ENCODE measurements at regions of chr20 and their contacts with region 1.

Region 1: DNA sequence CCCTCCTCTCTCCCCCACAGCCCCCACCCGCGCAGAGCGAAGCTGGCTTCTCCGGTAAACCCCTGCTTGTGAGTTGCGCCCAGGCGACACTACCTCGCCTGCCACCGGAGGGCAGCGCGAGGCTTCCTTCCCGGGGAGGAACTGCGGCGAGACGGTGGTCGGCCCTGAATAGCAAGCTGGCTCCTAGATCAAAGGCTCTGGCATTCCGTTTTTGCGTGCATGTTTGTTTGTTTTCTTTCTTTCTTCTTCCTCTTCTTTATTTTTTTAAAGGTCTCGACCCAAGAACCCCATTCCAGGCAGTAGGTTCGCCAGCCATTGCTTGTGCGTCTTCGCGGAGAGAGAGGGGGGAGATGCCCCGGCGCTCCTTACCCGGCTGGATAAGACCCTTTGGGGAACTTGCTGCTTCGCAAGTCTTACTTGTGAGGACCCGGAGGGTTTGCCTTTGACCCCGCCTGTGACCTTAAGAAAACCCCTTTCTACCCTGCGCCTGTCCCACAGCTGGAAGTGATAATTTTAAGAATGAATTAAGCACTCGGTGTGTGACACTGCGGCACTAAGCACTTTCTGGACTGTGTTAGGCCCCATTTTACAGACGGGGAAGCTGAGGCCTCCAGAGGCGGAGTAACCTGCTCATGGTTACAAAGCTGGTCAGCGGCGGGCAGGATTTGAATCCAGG is 92.7 kb upstream of the SIRPA start:
- DNase-seq: peak; percentile 70 to 78
- ATAC-seq: peak; percentile 84 to 87
- H3K4me3 ChIP-seq: peak overlapping the region; percentile 28
- H3K27ac ChIP-seq: peak overlapping the region; percentile 47 to 62; a peak in 5 of 6 replicates
- H3K4me1 ChIP-seq: peaks cover 11% of the 10 kb centered on the region
- CTCF ChIP-seq: peak; percentile 81
- EP300 ChIP-seq: no peak
- POLR2A ChIP-seq: no peak
- RAD21 ChIP-seq: peak; percentile 84 to 95

Region 2: DNA sequence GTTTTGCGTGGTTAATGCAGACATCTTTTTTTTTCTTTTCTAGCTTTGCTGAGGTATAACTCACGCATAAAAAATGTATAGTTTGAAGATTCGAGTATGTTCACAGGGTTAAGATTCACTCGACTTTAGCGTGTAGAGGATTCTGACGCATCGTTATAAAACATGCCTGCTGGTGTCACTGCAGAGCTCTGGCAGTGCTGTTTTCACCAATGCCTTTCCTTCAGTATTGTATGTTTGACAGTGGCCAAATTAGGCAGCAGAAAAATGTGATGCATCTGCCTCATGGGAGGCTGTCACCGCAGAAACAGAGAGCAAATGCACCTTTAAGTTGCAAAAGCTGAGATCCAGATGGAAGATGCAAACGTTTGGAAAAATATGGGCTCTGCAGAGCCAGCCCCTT is 293.3 kb before region 1 on chr20:
- CTCF ChIA-PET with region 1: interaction called, 13 read pairs
- POLR2A ChIA-PET with region 1: no interaction called
- DNase-seq: peak; percentile 26 to 39
- ATAC-seq: peak; percentile 89 to 92
- H3K4me3 ChIP-seq: no peak overlapping the region
- H3K27ac ChIP-seq: no peak overlapping the region
- H3K4me1 ChIP-seq: peaks cover 9% of the 10 kb centered on the region; the same call in 1 of the 3 replicates
- CTCF ChIP-seq: peak; percentile 56
- EP300 ChIP-seq: no peak
- POLR2A ChIP-seq: no peak
- RAD21 ChIP-seq: peak; percentile 56 to 65

Region 3: GRCh38 chr20:1784586-1784985 is 17.9 kb before region 1 on chr20:
- CTCF ChIA-PET with region 1: interaction called, 119 read pairs
- POLR2A ChIA-PET with region 1: no interaction called
- DNase-seq: no peak
- ATAC-seq: no peak
- H3K4me3 ChIP-seq: no peak overlapping the region
- H3K27ac ChIP-seq: no peak overlapping the region
- H3K4me1 ChIP-seq: no peaks in the 10 kb centered on the region
- CTCF ChIP-seq: no peak
- EP300 ChIP-seq: no peak
- POLR2A ChIP-seq: no peak
- RAD21 ChIP-seq: no peak

Region 4: GRCh38 chr20:1830240-1830639 is 27.7 kb after region 1 on chr20:
- CTCF ChIA-PET with region 1: interaction called, 17 read pairs
- POLR2A ChIA-PET with region 1: no interaction called
- DNase-seq: peak; percentile 79 to 91
- ATAC-seq: peak; percentile 77 to 87
- H3K4me3 ChIP-seq: no peak overlapping the region
- H3K27ac ChIP-seq: peak overlapping the region; percentile 32 to 69; a peak in 4 of 6 replicates
- H3K4me1 ChIP-seq: peaks cover 36% of the 10 kb centered on the region
- CTCF ChIP-seq: no peak
- EP300 ChIP-seq: peak in 1 of 2 experiments; percentile 57; a peak in 1 of 5 replicates
- POLR2A ChIP-seq: no peak
- RAD21 ChIP-seq: peak in 1 of 2 experiments; percentile 7; a peak in 1 of 5 replicates

Region 5: GRCh38 chr20:1870792-1871550 is 68.4 kb after region 1 on chr20:
- CTCF ChIA-PET with region 1: interaction called, 30 read pairs
- POLR2A ChIA-PET with region 1: no interaction called
- DNase-seq: no peak
- ATAC-seq: no peak
- H3K4me3 ChIP-seq: no peak overlapping the region
- H3K27ac ChIP-seq: no peak overlapping the region
- H3K4me1 ChIP-seq: peaks cover 25% of the 10 kb centered on the region
- CTCF ChIP-seq: no peak
- EP300 ChIP-seq: no peak
- POLR2A ChIP-seq: no peak
- RAD21 ChIP-seq: no peak

Region 6: GRCh38 chr20:1900321-1900801 is 97.8 kb after region 1 on chr20:
- CTCF ChIA-PET with region 1: interaction called, 12 read pairs
- POLR2A ChIA-PET with region 1: interaction called, 3 read pairs
- DNase-seq: peak; percentile 89 to 98
- ATAC-seq: peak; percentile 95 to 99
- H3K4me3 ChIP-seq: no peak overlapping the region
- H3K27ac ChIP-seq: peak overlapping the region in 1 of 2 experiments; percentile 56; a peak in 2 of 6 replicates
- H3K4me1 ChIP-seq: peaks cover 37% of the 10 kb centered on the region
- CTCF ChIP-seq: peak; percentile 80
- EP300 ChIP-seq: no peak
- POLR2A ChIP-seq: no peak
- RAD21 ChIP-seq: peak; percentile 67 to 69

Region 7: GRCh38 chr20:2114990-2115681 is 312.6 kb after region 1 on chr20:
- CTCF ChIA-PET with region 1: no interaction called
- POLR2A ChIA-PET with region 1: no interaction called
- DNase-seq: no peak
- ATAC-seq: no peak
- H3K4me3 ChIP-seq: no peak overlapping the region
- H3K27ac ChIP-seq: no peak overlapping the region
- H3K4me1 ChIP-seq: no peaks in the 10 kb centered on the region; the same call in 1 of the 3 replicates
- CTCF ChIP-seq: no peak
- EP300 ChIP-seq: no peak
- POLR2A ChIP-seq: no peak
- RAD21 ChIP-seq: no peak

Region 8: DNA sequence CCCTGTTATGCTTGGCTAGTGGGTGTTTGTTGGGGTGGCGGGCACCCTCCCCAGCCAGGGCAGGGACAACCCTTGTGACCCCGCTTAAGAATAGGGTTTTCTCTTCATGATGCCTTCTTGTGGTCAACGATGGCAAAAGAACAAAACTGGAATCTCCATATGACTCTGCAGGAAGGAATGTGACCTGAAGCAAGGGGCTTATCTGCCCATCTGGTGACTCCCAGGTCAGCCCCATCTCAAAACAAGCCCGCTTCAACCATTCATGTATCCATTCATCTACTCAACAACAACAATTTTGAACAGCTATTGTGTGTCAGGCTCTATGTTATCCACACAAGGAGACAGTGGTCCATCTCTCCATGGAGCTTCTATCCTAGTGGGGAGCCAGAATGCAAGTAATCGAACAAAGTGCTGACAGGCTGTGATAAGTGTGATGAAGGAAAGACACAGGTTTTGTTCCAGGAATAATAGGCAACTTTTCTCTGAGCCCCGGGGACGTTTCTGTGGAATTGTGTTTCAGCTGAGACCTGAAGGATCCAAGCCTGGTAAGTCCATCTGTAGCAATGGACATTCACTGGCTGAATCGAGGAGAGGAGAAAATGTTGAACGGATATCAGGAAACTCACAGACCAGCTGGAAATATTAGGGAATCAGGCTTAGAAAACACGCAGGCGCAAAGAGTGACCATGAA is 547.4 kb after region 1 on chr20:
- CTCF ChIA-PET with region 1: no interaction called
- POLR2A ChIA-PET with region 1: no interaction called
- DNase-seq: no peak
- ATAC-seq: no peak
- H3K4me3 ChIP-seq: no peak overlapping the region
- H3K27ac ChIP-seq: no peak overlapping the region
- H3K4me1 ChIP-seq: no peaks in the 10 kb centered on the region
- CTCF ChIP-seq: no peak
- EP300 ChIP-seq: no peak
- POLR2A ChIP-seq: no peak
- RAD21 ChIP-seq: no peak